Activated CD4-positive, alpha-beta memory T cell treated with anti-CD3 and anti-CD28 coated beads, Interleukin-2, amount 10 ng/mL, durations not matched to agents 7 days and 5 days (primary cell): ENCODE measurements at regions of chr15 and their contacts with region 1.

Region 1: GRCh38 chr15:73704869-73705645 is 20.9 kb downstream of the CD276 start:
- DNase-seq: peak; percentile 76
- H3K4me3 Mint-ChIP-seq: no peak overlapping the region
- H3K27ac Mint-ChIP-seq: no peak overlapping the region
- H3K4me1 Mint-ChIP-seq: peaks cover 9% of the 10 kb centered on the region
- H3K27me3 Mint-ChIP-seq: peaks cover 5% of the 10 kb centered on the region

Region 2: GRCh38 chr15:73560501-73561117 is 144.4 kb before region 1 on chr15:
- CTCF ChIA-PET with region 1: interaction called, 32 read pairs
- POLR2A ChIA-PET with region 1: no interaction called
- DNase-seq: no peak
- H3K4me3 Mint-ChIP-seq: no peak overlapping the region
- H3K27ac Mint-ChIP-seq: no peak overlapping the region
- H3K4me1 Mint-ChIP-seq: peaks cover 13% of the 10 kb centered on the region
- H3K27me3 Mint-ChIP-seq: no peaks in the 10 kb centered on the region

Region 3: DNA sequence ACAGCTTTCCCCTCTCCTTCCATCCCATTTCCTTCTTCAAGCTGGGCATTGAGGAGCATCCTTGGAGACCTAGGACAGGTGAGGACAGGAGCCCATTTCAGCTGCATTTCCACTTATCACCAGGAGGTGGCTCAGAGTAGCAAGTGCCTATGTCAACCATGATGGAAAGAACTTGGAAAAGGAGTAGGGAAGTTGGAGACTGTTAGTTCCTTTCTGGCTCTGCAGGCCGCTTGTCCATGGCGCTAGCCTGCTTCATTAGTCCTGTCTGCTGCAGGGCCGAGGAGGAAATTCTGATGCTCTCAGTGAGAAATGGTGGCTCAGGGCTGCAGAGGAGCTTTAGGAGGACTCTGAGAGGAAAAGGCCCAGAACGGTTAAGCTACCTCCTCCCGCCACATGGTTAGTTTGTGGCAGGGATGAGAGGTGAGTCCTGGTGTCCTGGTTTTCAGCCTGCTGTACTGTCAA is 27.9 kb before region 1 on chr15:
- CTCF ChIA-PET with region 1: interaction called, 76 read pairs
- POLR2A ChIA-PET with region 1: interaction called, 30 read pairs
- DNase-seq: peak; percentile 55
- H3K4me3 Mint-ChIP-seq: no peak overlapping the region
- H3K27ac Mint-ChIP-seq: no peak overlapping the region
- H3K4me1 Mint-ChIP-seq: peaks cover 17% of the 10 kb centered on the region
- H3K27me3 Mint-ChIP-seq: peaks cover 36% of the 10 kb centered on the region

Region 4: DNA sequence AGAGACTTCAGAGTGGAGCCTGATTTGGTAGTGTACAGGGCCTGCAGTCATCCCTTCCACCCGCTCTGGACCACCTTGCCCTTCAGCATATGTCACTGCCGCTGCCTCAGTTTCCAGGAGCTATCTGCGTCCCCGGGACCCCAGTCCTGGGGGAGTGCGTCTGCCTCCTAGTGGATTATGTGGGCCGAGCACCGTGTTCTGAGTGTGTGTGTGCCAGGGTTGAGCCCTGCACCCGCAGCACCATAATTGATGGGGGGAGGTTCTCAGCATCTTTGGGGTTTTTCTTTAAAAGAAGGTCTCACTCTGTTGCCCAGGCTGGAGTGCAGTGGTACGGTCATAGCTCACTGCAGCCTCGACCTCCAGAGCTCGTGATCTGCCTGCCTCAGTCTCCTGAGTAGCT is 12.7 kb after region 1 on chr15:
- CTCF ChIA-PET with region 1: interaction called, 20 read pairs
- POLR2A ChIA-PET with region 1: no interaction called
- DNase-seq: no peak
- H3K4me3 Mint-ChIP-seq: no peak overlapping the region
- H3K27ac Mint-ChIP-seq: no peak overlapping the region
- H3K4me1 Mint-ChIP-seq: no peaks in the 10 kb centered on the region
- H3K27me3 Mint-ChIP-seq: peaks cover 18% of the 10 kb centered on the region

Region 5: DNA sequence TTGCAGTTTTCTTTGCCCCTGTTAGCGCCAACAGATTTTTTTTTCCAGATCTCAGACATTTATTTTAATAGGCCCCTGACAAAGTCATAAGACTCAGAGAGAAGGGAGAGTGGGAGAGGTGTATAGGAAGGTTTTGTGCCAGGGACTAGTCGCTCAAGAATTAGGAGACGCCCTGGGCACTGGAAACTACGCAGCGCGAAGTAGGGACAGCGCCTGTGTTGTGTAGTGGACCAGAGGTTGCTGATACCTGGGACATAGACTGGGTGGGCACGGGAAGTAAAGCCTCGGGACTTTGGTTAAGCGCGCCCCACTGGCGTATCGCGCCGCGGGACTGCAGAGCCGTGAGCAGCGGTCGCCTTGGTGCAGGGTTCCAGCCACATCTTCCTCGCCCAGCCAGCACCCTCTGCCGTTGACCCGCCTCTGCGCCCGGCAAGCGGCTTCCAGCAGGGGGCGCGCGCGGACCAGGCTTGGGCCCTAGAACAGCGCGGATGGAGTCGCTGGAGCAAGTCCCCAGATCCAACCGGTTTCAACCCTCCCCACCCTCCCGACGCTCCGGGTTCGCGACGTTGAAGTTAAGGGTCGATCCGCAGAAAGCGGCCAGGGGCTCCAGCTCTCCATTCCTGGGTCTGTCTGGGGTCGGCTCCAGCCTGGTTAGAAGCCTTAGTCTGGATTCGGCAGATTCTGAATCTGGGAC is 422.4 kb after region 1 on chr15:
- CTCF ChIA-PET with region 1: no interaction called
- POLR2A ChIA-PET with region 1: no interaction called
- DNase-seq: peak; percentile 87
- H3K4me3 Mint-ChIP-seq: no peak overlapping the region
- H3K27ac Mint-ChIP-seq: no peak overlapping the region
- H3K4me1 Mint-ChIP-seq: peaks cover 12% of the 10 kb centered on the region
- H3K27me3 Mint-ChIP-seq: peaks cover 64% of the 10 kb centered on the region